ENCODE measurements at regions of chr3 and their contacts with region 1.

Region 1: DNA sequence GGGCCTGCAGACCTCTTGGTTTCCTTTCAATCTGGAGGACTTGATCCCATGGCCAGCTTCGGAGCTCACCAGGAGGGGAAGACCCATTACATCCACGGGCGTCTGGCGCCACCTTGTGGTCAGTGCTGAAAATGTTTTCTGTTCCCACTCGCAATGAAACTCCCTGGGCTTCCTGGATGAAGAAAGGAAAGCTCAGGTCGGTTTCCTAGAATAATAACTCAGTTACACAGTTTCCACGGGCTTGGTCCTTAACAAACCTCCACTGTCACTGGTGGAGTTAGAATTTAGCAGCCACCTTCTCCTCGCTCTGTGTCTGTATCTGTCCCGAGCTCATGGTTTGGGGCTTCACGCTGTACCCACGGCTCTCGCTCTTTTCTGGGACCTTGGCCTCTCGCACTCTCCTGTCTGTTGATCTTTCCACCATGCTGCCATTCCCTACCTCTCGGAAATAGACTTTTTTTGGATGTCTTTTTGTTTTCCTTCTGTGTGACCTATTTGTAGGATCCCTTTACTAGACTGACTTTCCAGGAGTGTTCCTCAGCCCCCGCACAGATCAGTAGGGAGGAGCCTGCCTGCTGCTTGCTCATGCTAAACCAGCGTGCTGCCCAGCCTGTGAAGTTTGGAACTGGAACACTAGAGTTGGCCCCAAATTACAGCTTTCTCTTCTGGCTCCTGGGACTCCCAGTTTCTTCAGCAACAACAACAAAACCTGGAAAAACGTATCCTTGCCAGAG is 56.3 kb downstream of the IL20RB start:
- DNase-seq: peak; percentile 85
- ATAC-seq: peak; percentile 90
- H3K4me3 ChIP-seq: peak overlapping the region in 4 of 5 experiments; percentile 7 to 55 (median 38)
- H3K4me3 Mint-ChIP-seq: peak overlapping the region; percentile 71
- H3K27ac ChIP-seq: no peak overlapping the region
- H3K27ac Mint-ChIP-seq: no peak overlapping the region
- H3K4me1 ChIP-seq: peaks cover 5 to 9% of the 10 kb centered on the region in 2 donors
- H3K4me1 Mint-ChIP-seq: peaks cover 7% of the 10 kb centered on the region
- H3K27me3 ChIP-seq: no peaks in the 10 kb centered on the region
- H3K27me3 Mint-ChIP-seq: no peaks in the 10 kb centered on the region
- CTCF ChIP-seq: peak; percentile 95

Region 2: DNA sequence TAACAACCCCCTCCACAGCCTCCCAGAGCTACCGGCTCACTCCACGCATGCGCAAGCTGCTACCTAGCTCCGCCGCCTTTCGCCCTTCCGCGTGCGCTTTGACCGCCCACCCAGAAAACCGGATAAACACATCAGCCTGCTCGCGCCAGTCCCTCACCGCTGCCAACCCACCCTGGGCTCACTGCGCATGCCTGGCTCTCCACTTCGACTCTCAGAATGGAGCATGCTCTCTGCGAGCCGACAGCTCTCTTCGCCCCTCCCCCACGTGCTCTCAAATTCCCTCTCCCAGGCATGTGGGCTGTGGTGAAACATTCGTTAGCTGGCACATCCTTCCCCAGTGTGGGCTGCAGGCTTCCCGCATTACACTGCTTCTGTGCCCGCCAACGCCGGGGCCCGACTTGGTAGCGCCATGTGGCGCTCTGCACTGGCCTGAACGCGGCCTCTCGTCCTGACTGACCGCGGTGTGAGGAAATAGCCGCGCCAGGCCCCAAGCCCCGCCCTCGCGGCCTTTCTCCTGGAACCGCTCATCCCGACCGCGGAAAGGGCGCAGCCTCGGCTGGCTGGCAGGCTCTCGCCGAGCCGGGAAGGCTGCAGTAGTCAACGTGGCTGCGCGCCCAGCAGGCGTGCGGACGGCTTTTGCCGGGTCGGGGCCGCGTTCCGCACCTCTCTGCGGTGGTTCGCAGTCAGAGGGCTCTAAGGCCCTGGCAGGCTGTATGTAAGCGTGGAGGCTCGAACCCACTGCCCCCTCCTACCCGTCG is 817.5 kb before region 1 on chr3:
- CTCF ChIA-PET with region 1: interaction called, 11 read pairs
- POLR2A ChIA-PET with region 1: no interaction called
- intact Hi-C with region 1: no loop called
- DNase-seq: peak; percentile 99
- ATAC-seq: peak; percentile 68
- H3K4me3 ChIP-seq: peak overlapping the region; percentile 65 to 95 (median 86)
- H3K4me3 Mint-ChIP-seq: peak overlapping the region; percentile 97
- H3K27ac ChIP-seq: peak overlapping the region; percentile 91 to 99
- H3K27ac Mint-ChIP-seq: peak overlapping the region; percentile 100
- H3K4me1 ChIP-seq: peaks cover 34 to 36% of the 10 kb centered on the region in 2 donors
- H3K4me1 Mint-ChIP-seq: peaks cover 36% of the 10 kb centered on the region
- H3K27me3 ChIP-seq: no peaks in the 10 kb centered on the region
- H3K27me3 Mint-ChIP-seq: no peaks in the 10 kb centered on the region
- CTCF ChIP-seq: no peak

Region 3: DNA sequence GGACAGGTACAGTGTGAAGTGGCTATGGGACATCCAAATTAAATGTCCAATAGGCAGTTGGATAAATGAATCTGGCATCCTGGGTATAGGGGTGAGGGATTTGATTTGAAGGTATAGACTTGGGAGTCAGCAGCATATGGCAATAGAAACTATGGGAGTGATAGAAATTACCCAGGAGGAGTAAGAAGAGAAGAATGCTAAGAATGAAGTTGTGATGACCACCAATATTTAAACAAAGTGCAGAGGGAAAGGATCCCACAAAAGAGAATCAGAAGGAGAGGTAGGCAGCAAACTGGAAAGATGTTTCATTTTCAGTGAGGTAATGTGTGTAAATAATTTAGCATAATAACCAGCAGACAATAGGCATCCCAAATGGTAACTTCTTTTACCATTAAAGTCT is 804.2 kb before region 1 on chr3:
- CTCF ChIA-PET with region 1: no interaction called
- POLR2A ChIA-PET with region 1: no interaction called
- intact Hi-C with region 1: no loop called
- DNase-seq: no peak
- ATAC-seq: no peak
- H3K4me3 ChIP-seq: no peak overlapping the region
- H3K4me3 Mint-ChIP-seq: no peak overlapping the region
- H3K27ac ChIP-seq: no peak overlapping the region
- H3K27ac Mint-ChIP-seq: no peak overlapping the region
- H3K4me1 ChIP-seq: no peaks in the 10 kb centered on the region
- H3K4me1 Mint-ChIP-seq: no peaks in the 10 kb centered on the region
- H3K27me3 ChIP-seq: peaks cover 0 to 6% (median 2%) of the 10 kb centered on the region in 4 experiments
- H3K27me3 Mint-ChIP-seq: peaks cover 32% of the 10 kb centered on the region
- CTCF ChIP-seq: no peak

Region 4: DNA sequence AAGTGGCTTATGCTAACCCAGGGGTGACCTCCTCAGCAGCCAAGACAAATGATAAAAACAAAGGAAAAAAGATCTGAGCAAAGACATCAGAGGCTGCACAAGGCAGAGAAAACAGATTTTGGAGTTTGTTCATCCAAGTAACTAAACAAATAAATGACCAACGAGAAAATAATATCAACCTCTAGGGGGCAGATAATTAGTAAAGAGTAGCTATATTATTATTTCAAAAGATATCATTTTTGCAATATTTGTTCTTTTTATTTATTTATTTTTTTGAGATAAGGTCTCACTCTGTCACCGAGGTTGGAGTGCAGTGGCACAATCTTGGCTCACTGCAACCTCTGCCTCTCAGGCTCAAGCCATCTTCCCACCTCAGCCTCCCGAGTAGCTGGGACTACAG is 662.2 kb before region 1 on chr3:
- CTCF ChIA-PET with region 1: interaction called, 14 read pairs
- POLR2A ChIA-PET with region 1: no interaction called
- intact Hi-C with region 1: no loop called
- DNase-seq: no peak
- ATAC-seq: no peak
- H3K4me3 ChIP-seq: no peak overlapping the region
- H3K4me3 Mint-ChIP-seq: no peak overlapping the region
- H3K27ac ChIP-seq: no peak overlapping the region
- H3K27ac Mint-ChIP-seq: no peak overlapping the region
- H3K4me1 ChIP-seq: no peaks in the 10 kb centered on the region
- H3K4me1 Mint-ChIP-seq: no peaks in the 10 kb centered on the region
- H3K27me3 ChIP-seq: no peaks in the 10 kb centered on the region
- H3K27me3 Mint-ChIP-seq: no peaks in the 10 kb centered on the region
- CTCF ChIP-seq: no peak

Region 5: DNA sequence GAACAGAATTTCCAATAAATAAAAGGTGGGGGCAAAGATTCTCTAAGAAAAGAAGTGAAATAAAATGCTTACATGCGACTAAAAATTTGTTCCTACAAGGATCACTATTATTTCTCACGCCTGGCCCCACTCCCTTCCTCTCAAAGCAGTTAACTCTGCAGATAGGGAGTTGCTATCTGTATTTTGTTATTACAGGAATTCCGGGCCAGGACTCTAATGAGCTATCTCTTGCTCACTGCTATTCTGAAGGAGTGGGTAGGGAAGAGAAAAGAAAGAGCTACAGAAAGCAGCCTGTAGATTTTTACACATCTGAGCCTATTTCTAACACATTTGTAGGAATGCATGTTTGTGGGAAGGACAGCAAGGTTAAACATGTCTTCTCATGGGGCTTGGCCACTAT is 623.5 kb before region 1 on chr3:
- CTCF ChIA-PET with region 1: interaction called, 131 read pairs
- POLR2A ChIA-PET with region 1: no interaction called
- intact Hi-C with region 1: loop called (anchors 1 kb)
- DNase-seq: no peak
- ATAC-seq: no peak
- H3K4me3 ChIP-seq: no peak overlapping the region
- H3K4me3 Mint-ChIP-seq: no peak overlapping the region
- H3K27ac ChIP-seq: no peak overlapping the region
- H3K27ac Mint-ChIP-seq: no peak overlapping the region
- H3K4me1 ChIP-seq: no peaks in the 10 kb centered on the region
- H3K4me1 Mint-ChIP-seq: peaks cover 5% of the 10 kb centered on the region
- H3K27me3 ChIP-seq: no peaks in the 10 kb centered on the region
- H3K27me3 Mint-ChIP-seq: no peaks in the 10 kb centered on the region
- CTCF ChIP-seq: no peak

Region 6: GRCh38 chr3:136818769-136819391 is 195.2 kb before region 1 on chr3 and contains the start of gene SLC35G2:
- CTCF ChIA-PET with region 1: interaction called, 3 read pairs
- POLR2A ChIA-PET with region 1: no interaction called
- intact Hi-C with region 1: loop called (anchors 2 kb)
- DNase-seq: peak; percentile 38
- ATAC-seq: peak; percentile 68
- H3K4me3 ChIP-seq: peak within 1 kb of the TSS; percentile 43 to 66 (median 58)
- H3K4me3 Mint-ChIP-seq: peak within 1 kb of the TSS; percentile 95
- H3K27ac ChIP-seq: no peak within 1 kb of the TSS
- H3K27ac Mint-ChIP-seq: peak within 1 kb of the TSS; percentile 89
- H3K4me1 ChIP-seq: peaks cover 21 to 22% of the 10 kb centered on the region in 2 donors
- H3K4me1 Mint-ChIP-seq: peaks cover 23% of the 10 kb centered on the region
- H3K27me3 ChIP-seq: peaks cover 0 to 40% (median 31%) of the 10 kb centered on the region in 4 experiments
- H3K27me3 Mint-ChIP-seq: peaks cover 30% of the 10 kb centered on the region
- CTCF ChIP-seq: no peak
- total RNA-seq, gene SLC35G2: 6.3 and 9.4 TPM in 2 replicates

Region 7: GRCh38 chr3:136949708-136950107 is 64.4 kb before region 1 on chr3:
- CTCF ChIA-PET with region 1: interaction called, 11 read pairs
- POLR2A ChIA-PET with region 1: no interaction called
- intact Hi-C with region 1: no loop called
- DNase-seq: no peak
- ATAC-seq: no peak
- H3K4me3 ChIP-seq: no peak overlapping the region
- H3K4me3 Mint-ChIP-seq: no peak overlapping the region
- H3K27ac ChIP-seq: no peak overlapping the region
- H3K27ac Mint-ChIP-seq: no peak overlapping the region
- H3K4me1 ChIP-seq: peaks cover 17 to 29% of the 10 kb centered on the region in 2 donors
- H3K4me1 Mint-ChIP-seq: peaks cover 40% of the 10 kb centered on the region
- H3K27me3 ChIP-seq: no peaks in the 10 kb centered on the region
- H3K27me3 Mint-ChIP-seq: no peaks in the 10 kb centered on the region
- CTCF ChIP-seq: no peak

Region 8: GRCh38 chr3:137032465-137033120 is 18.5 kb after region 1 on chr3:
- CTCF ChIA-PET with region 1: interaction called, 15 read pairs
- POLR2A ChIA-PET with region 1: no interaction called
- intact Hi-C with region 1: no loop called
- DNase-seq: peak; percentile 65
- ATAC-seq: peak; percentile 85
- H3K4me3 ChIP-seq: peak overlapping the region in 3 of 5 experiments; percentile 11 to 49 (median 34)
- H3K4me3 Mint-ChIP-seq: peak overlapping the region; percentile 70
- H3K27ac ChIP-seq: no peak overlapping the region
- H3K27ac Mint-ChIP-seq: no peak overlapping the region
- H3K4me1 ChIP-seq: peaks cover 7 to 10% of the 10 kb centered on the region in 2 donors
- H3K4me1 Mint-ChIP-seq: peaks cover 9% of the 10 kb centered on the region
- H3K27me3 ChIP-seq: peaks cover 0 to 25% (median 8%) of the 10 kb centered on the region in 4 experiments
- H3K27me3 Mint-ChIP-seq: peaks cover 31% of the 10 kb centered on the region
- CTCF ChIP-seq: peak; percentile 98